Posterior vena cava (tissue), 2 donors: ENCODE measurements at regions of chr14 and their contacts with region 1.

Region 1: DNA sequence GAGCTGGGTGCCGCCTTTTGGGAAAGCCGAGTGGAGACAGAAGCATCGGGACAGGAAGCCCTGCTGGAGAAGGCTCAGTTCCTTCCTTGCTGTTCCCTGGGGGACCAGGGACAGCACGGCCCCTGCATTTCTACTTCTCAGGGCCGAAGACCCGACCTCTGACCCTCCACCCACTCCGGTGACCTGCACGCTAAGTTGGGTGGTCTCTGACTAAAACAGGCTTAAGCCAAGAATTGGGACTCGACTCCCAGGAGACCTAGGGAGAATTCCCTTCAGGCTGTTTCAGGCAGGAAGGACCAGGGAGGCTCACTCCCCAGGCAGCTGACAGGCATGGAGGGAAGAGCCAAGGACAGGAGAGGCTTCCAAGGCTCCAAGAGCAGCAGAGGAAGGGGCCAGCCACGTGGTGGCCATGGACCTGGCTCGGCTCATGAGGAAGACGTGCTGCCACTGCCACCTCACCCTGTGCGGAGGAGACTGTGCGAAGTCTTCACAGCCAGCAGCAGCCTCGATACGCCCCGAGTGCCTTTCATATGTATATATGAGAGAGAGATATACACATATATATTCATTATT is 43.9 kb downstream of the DCAF4 start:
- DNase-seq: no peak

Region 2: DNA sequence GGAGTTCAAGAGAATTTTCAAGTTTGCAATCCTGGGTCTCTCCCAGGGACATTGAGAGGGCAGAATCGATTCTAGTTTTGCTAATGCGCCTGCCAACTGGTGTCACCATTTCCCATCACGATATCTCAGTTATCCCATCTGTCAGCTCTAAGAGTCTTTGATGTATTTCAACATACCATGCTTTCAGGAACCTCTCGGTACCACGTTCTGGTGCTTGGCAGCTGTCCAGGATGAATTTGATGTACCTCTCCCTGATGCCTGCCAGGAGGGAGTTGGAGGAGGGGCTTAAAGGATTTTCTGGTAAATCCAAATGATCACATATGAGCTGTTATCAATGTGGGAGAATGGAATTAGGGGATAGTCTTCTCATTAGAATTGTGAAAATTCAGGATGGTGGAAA is 705.4 kb before region 1 on chr14:
- intact Hi-C with region 1: loop called in 1 of 2 experiments (anchors 5 kb)
- DNase-seq: no peak

Region 3: DNA sequence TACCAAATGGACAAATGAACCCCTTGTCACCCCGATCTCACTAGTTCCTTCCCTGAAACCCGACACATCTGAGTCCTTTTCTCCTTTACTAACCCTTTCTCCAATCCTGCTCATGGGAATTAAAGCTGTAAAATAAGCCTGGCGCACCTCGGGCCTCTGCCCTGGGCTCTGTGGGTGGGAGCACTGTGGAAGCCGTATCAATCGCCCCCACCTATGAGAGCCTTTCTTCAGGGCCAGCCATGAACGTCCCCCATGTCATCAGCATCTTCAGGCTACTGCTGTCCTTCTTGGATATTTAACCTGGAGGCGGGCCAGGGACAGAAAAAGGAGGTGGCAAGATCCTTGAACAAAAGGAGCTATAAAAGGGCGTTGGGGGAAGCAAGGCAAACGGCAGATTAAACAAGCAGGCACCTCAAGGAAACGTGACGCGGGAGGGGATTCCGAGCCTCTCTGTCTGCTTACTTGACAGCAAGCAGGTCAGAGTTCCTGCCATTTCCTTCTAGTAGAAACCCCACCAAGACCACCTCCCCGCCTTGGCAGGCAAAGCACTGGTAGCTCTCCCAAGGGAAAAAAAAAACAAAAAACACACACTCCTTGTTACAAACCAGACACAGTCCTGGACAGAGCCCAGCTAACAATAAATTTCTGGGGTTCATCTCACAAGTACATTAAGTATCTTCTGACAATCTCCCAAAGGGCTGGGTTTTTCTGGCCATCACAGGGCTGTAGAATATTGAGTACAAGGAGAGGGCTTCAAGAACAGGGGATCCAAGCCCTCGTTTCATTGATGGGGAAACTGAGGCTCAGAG is 139.2 kb before region 1 on chr14:
- intact Hi-C with region 1: no loop called
- DNase-seq: no peak